ENCODE measurements at regions of chr13 and their contacts with region 1.

Region 1: DNA sequence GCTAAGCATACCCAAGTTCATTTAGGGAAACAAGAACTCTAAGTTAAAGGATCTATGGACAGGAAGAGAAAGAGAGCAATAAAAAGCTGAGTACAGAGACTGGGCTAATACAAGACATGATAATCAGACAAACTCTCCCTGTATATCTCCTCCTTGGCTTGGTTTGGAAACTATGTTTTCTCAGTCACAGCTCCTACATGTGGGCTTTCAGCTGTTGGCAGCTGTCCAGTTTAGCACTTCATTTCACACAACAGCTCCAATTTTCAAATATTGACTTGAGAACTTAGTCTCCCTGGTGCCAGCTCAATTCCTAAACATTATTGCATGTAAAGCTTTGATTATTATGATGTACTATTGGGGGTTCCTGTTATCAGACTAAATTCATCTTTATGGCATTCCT is 222.8 kb upstream of the OBI1 start:
- DNase-seq: no peak
- ATAC-seq: no peak
- H3K4me3 ChIP-seq: no peak overlapping the region
- H3K27ac ChIP-seq: no peak overlapping the region
- H3K4me1 ChIP-seq: no peaks in the 10 kb centered on the region
- H3K27me3 ChIP-seq: no peaks in the 10 kb centered on the region
- CTCF ChIP-seq: no peak
- EP300 ChIP-seq: no peak
- POLR2A ChIP-seq: no peak
- RAD21 ChIP-seq: no peak

Region 2: DNA sequence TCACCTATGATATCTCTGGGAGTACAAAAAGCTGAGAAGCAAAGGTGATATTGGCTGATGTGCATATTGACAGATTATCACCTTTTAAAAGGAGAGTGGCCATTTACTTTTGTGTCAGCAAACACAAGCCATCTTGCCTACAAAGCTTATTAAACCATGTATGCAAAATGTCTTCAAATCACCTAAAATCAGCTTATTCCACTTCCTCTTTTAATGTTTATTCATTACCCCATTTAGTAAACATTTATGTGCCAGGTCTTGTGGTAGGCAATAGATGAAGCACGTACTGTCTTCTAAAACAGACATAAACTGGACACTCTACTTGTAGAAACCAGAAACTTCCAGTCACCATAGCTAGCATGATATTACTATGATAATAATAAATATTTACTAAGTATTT is 169.7 kb after region 1 on chr13:
- CTCF ChIA-PET with region 1: interaction called, 27 read pairs
- POLR2A ChIA-PET with region 1: no interaction called
- RAD21 ChIA-PET with region 1: interaction called, 32 read pairs
- SMC1A ChIA-PET with region 1: interaction called, 30 read pairs
- in situ Hi-C with region 1: no loop called
- intact Hi-C with region 1: loop called (anchors 2 kb)
- DNase-seq: no peak
- ATAC-seq: peak; percentile 31
- H3K4me3 ChIP-seq: no peak overlapping the region
- H3K27ac ChIP-seq: no peak overlapping the region
- H3K4me1 ChIP-seq: no peaks in the 10 kb centered on the region
- H3K27me3 ChIP-seq: no peaks in the 10 kb centered on the region; a peak in 1 of 4 replicates
- CTCF ChIP-seq: no peak
- EP300 ChIP-seq: no peak
- POLR2A ChIP-seq: no peak
- RAD21 ChIP-seq: no peak

Measured in GM12878 (cell line).